Panc1 (cell line): ENCODE measurements at regions of chr19 and their contacts with region 1.

Region 1: GRCh38 chr19:49502866-49503581 is 6.8 kb downstream of the RPS11 start:
- DNase-seq: no peak
- ATAC-seq: peak; percentile 61
- H3K4me3 ChIP-seq: no peak overlapping the region
- H3K27ac ChIP-seq: no peak overlapping the region
- H3K4me1 ChIP-seq: peaks cover 10% of the 10 kb centered on the region
- H3K27me3 ChIP-seq: no peaks in the 10 kb centered on the region
- CTCF ChIP-seq: peak; percentile 76

Region 2: GRCh38 chr19:49546825-49547565 is 44.0 kb after region 1 on chr19:
- CTCF ChIA-PET with region 1: interaction called, 9 read pairs
- POLR2A ChIA-PET with region 1: no interaction called
- in situ Hi-C with region 1: no loop called
- intact Hi-C with region 1: loop called (anchors 2 kb)
- DNase-seq: no peak
- ATAC-seq: peak; percentile 90
- H3K4me3 ChIP-seq: peak overlapping the region in 1 of 2 experiments; percentile 35; a peak in 2 of 4 replicates
- H3K27ac ChIP-seq: no peak overlapping the region
- H3K4me1 ChIP-seq: peaks cover 3% of the 10 kb centered on the region; the same call in 1 of the 2 replicates
- H3K27me3 ChIP-seq: no peaks in the 10 kb centered on the region
- CTCF ChIP-seq: no peak; the same call in 1 of the 2 replicates